Left ventricle myocardium superior (tissue), 1 donor: ENCODE measurements at regions of chr7 and their contacts with region 1.

Region 1: GRCh38 chr7:99997545-99998137 is 17.8 kb upstream of the ZKSCAN1 start:
- DNase-seq: peak; percentile 76
- ATAC-seq: peak; percentile 79

Region 2: DNA sequence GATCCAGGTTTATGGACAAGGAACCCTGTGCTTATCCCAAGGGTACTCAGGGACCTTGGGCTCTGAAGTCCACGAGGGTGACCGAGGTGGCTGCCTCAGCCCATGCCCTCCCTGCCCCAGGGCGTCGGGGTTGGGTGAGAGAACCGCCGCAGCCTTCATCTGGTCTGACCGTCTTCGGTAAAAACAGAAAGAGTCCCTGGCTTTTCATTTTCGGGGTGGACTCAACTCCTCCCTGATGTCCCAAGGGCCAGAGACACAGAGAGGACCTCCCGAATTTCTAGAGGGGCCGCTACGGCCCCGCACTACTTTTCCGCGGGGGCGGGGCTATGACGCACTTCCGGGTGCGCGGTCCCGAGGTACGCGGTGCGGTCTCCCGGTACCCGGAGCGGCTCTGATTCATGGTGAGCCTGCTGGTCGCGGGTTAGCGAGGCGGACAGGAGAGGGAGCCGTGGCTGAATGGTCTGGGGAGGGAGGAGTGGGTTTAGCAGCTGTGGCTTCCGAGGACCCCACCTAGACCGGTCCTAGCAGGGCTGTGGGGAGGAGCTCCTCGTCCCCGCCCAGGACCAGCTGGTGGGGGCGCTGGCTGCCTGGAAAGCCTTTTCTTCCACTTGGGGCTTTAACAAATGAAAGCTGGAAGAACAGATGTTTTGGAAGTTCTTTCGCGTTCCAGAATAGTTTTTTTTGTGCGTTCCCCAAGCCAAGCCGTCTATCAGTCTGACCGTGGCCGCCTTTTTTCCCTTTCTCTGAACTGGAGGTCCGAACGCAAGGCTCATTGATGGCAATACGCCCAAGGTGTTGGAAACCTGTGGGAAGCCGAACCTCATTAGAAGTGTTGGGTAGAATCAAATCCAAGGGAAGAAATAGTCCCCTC is 52.0 kb after region 1 on chr7 and contains the start of gene ZSCAN21:
- intact Hi-C with region 1: loop called (anchors 10 kb)
- DNase-seq: peak; percentile 93
- ATAC-seq: peak; percentile 99
- total RNA-seq, gene ZSCAN21: 7.7 TPM